BJ (cell line): ENCODE measurements at regions of chr16 and their contacts with region 1.

Region 1: GRCh38 chr16:78727536-78727935 is 628.1 kb downstream of the WWOX start:
- DNase-seq: no peak
- H3K4me3 ChIP-seq: no peak overlapping the region
- H3K27me3 ChIP-seq: no peaks in the 10 kb centered on the region
- CTCF ChIP-seq: no peak

Region 2: DNA sequence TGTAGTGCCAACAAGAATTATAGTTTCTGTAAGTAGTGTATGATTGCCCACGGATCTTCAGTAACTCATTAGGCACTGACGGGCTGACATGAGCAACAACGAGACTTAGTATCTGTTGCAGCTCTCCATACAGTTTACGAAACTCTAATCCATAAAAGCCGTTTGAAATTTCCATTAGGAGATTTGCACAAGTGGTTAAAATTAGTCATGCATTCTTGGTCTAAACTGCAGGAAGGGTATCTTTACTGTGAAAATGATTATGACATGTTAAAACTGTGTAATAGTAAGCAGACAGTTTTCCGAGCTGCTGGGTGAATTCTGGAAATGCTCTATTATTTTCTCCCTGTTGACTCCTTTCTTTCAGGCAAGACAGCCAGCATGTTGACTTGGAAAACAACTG is 23.1 kb before region 1 on chr16:
- CTCF ChIA-PET with region 1: no interaction called
- POLR2A ChIA-PET with region 1: interaction called, 16 read pairs
- DNase-seq: peak; percentile 36
- H3K4me3 ChIP-seq: no peak overlapping the region
- H3K27me3 ChIP-seq: no peaks in the 10 kb centered on the region
- CTCF ChIP-seq: no peak